ENCODE measurements at regions of chr1 and their contacts with region 1.

Region 1: DNA sequence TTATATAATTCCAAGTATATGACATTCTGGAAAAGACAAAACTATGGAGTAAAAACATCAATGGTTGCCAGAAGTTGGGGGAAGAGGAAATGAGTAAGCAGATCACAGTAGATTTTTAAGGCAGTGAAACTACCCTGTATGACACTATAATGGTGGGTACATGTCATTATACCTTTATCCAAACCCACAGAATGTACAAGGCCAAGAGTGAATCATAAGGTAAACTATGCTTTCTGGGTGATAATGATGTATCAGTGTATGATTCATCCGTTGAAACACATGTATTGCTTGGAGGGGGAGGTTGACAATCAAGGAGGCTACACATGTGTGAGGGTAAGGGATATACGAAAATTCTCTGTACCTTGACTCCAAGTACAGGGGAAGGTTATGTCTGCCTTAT is 862.7 kb downstream of the PLA2G4A start:
- DNase-seq: peak; percentile 86
- H3K4me3 ChIP-seq: no peak overlapping the region
- H3K27ac ChIP-seq: no peak overlapping the region
- H3K4me1 ChIP-seq: peaks cover 10% of the 10 kb centered on the region
- H3K27me3 ChIP-seq: no peaks in the 10 kb centered on the region
- CTCF ChIP-seq: no peak
- POLR2A ChIP-seq: peak; percentile 51

Region 2: GRCh38 chr1:187655175-187655574 is 36.3 kb before region 1 on chr1:
- CTCF ChIA-PET with region 1: no interaction called
- POLR2A ChIA-PET with region 1: no interaction called
- dilution Hi-C with region 1: no loop called
- intact Hi-C with region 1: loop called (anchors 1 kb)
- DNase-seq: peak; percentile 61
- H3K4me3 ChIP-seq: no peak overlapping the region
- H3K27ac ChIP-seq: peak overlapping the region; percentile 94
- H3K4me1 ChIP-seq: peaks cover 3% of the 10 kb centered on the region
- H3K27me3 ChIP-seq: no peaks in the 10 kb centered on the region
- CTCF ChIP-seq: no peak
- POLR2A ChIP-seq: no peak

Region 3: DNA sequence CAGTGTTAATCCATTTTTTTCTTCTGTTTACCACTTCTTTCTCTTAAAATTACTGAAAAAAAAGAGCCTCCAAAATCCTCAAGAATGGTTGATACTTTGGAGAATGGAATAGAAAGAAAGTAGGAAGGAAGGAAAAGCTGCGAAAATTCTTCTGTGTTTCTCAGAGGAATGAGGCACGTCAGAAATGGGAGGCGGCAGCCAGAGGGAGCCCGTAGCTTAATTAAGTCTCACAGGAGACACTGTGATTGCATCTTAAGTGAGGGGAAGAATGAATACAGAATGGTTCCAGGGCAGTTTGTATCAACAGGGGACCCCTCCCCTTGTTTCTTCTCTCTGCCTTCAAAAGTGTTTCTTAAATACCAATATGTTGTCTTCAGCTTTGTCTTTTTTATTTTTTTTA is 236.8 kb after region 1 on chr1:
- CTCF ChIA-PET with region 1: no interaction called
- POLR2A ChIA-PET with region 1: no interaction called
- dilution Hi-C with region 1: no loop called
- intact Hi-C with region 1: no loop called
- DNase-seq: peak; percentile 78
- H3K4me3 ChIP-seq: no peak overlapping the region
- H3K27ac ChIP-seq: no peak overlapping the region
- H3K4me1 ChIP-seq: peaks cover 6% of the 10 kb centered on the region
- H3K27me3 ChIP-seq: no peaks in the 10 kb centered on the region
- CTCF ChIP-seq: peak; percentile 52 to 58
- POLR2A ChIP-seq: no peak

Measured in endothelial cell of umbilical vein (primary cell).